Caco-2 (cell line): ENCODE measurements at regions of chr3 and their contacts with region 1.

Region 1: GRCh38 chr3:160027541-160028195 is 39.0 kb downstream of the IL12A start:
- DNase-seq: no peak
- H3K4me3 ChIP-seq: no peak overlapping the region
- H3K4me3 Mint-ChIP-seq: no peak overlapping the region
- H3K27ac Mint-ChIP-seq: no peak overlapping the region
- H3K4me1 ChIP-seq: no peaks in the 10 kb centered on the region
- H3K4me1 Mint-ChIP-seq: peaks cover 6% of the 10 kb centered on the region
- H3K27me3 ChIP-seq: no peaks in the 10 kb centered on the region
- H3K27me3 Mint-ChIP-seq: no peaks in the 10 kb centered on the region
- CTCF ChIP-seq: no peak

Region 2: DNA sequence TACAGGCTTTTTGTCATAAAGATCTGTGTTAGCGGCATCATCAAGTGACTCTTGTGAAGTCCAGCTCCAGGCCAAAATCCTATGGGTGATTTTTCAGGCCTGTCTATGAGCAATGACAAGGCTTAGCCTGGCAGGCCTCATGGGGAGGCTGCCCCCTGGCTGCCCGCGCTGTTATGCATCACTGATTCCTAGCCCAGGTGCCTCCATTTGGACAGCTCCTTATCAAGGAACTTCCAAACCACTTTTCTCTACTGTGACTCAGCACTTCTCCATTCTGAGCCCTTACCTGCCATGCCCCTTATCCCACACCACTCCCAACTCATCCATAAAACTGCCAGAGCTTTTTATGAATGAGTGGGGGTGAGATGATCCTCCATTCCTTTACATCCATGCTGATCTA is 106.1 kb after region 1 on chr3:
- CTCF ChIA-PET with region 1: interaction called, 4 read pairs
- POLR2A ChIA-PET with region 1: no interaction called
- intact Hi-C with region 1: loop called (anchors 1 kb)
- DNase-seq: peak; percentile 42 to 53
- H3K4me3 ChIP-seq: no peak overlapping the region
- H3K4me3 Mint-ChIP-seq: no peak overlapping the region
- H3K27ac Mint-ChIP-seq: no peak overlapping the region
- H3K4me1 ChIP-seq: peaks cover 8% of the 10 kb centered on the region; the same call in 1 of the 2 replicates
- H3K4me1 Mint-ChIP-seq: peaks cover 8% of the 10 kb centered on the region
- H3K27me3 ChIP-seq: no peaks in the 10 kb centered on the region
- H3K27me3 Mint-ChIP-seq: no peaks in the 10 kb centered on the region
- CTCF ChIP-seq: peak in 1 of 2 experiments; percentile 33

Region 3: GRCh38 chr3:160210799-160211221 is 183.1 kb after region 1 on chr3:
- CTCF ChIA-PET with region 1: interaction called, 5 read pairs
- POLR2A ChIA-PET with region 1: no interaction called
- intact Hi-C with region 1: loop called (anchors 1 kb)
- DNase-seq: peak in 1 of 2 experiments; percentile 51
- H3K4me3 ChIP-seq: no peak overlapping the region
- H3K4me3 Mint-ChIP-seq: no peak overlapping the region
- H3K27ac Mint-ChIP-seq: peak overlapping the region; percentile 65
- H3K4me1 ChIP-seq: peaks cover 3% of the 10 kb centered on the region; the same call in 1 of the 2 replicates
- H3K4me1 Mint-ChIP-seq: peaks cover 9% of the 10 kb centered on the region
- H3K27me3 ChIP-seq: no peaks in the 10 kb centered on the region
- H3K27me3 Mint-ChIP-seq: no peaks in the 10 kb centered on the region
- CTCF ChIP-seq: peak; percentile 19 to 40

Region 4: DNA sequence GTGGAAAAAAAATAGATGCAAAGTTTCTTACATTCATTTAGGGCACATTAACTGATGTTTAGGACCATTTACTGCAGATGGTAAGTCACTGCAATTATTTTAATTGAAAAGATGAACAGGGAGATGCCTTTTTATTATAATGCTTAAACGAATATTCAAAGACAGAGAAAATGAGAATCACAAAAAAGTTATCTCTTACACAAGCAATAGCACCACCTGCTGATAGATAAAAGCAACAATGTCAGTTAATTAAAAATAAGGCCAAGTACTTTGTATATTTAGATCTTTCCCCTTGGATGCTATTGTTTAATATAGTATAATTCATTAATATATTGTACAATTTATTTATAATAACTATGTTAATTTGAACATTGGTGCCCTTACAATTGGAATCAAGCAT is 315.5 kb after region 1 on chr3:
- CTCF ChIA-PET with region 1: no interaction called
- POLR2A ChIA-PET with region 1: no interaction called
- intact Hi-C with region 1: loop called (anchors 1 kb)
- DNase-seq: no peak
- H3K4me3 ChIP-seq: no peak overlapping the region
- H3K4me3 Mint-ChIP-seq: no peak overlapping the region
- H3K27ac Mint-ChIP-seq: no peak overlapping the region
- H3K4me1 ChIP-seq: no peaks in the 10 kb centered on the region
- H3K4me1 Mint-ChIP-seq: no peaks in the 10 kb centered on the region
- H3K27me3 ChIP-seq: no peaks in the 10 kb centered on the region
- H3K27me3 Mint-ChIP-seq: no peaks in the 10 kb centered on the region
- CTCF ChIP-seq: peak; percentile 16 to 31

Region 5: DNA sequence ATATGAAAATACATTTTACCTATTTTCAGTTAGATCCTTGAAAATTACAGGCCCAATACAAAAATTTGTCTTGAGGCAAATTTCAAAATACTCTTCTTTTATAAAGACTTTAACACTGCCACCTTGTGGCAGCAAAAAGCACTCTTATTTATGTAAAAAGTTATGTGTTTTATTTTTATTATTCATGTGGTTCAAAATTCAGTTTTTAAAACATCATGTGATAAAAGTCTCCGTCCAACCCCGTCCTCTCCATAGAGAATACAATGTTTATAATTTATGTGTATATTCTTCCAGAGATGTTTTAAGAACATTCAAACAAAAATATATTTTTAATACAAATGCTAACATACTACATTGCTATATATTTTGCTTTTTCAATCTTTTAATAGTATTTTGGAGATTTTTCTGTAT is 458.8 kb after region 1 on chr3:
- CTCF ChIA-PET with region 1: no interaction called
- POLR2A ChIA-PET with region 1: no interaction called
- intact Hi-C with region 1: loop called (anchors 2 kb)
- DNase-seq: no peak
- H3K4me3 ChIP-seq: no peak overlapping the region
- H3K4me3 Mint-ChIP-seq: no peak overlapping the region
- H3K27ac Mint-ChIP-seq: no peak overlapping the region
- H3K4me1 ChIP-seq: no peaks in the 10 kb centered on the region
- H3K4me1 Mint-ChIP-seq: no peaks in the 10 kb centered on the region
- H3K27me3 ChIP-seq: no peaks in the 10 kb centered on the region
- H3K27me3 Mint-ChIP-seq: no peaks in the 10 kb centered on the region
- CTCF ChIP-seq: peak; percentile 50 to 62